ENCODE measurements at regions of chr5 and their contacts with region 1.

Region 1: DNA sequence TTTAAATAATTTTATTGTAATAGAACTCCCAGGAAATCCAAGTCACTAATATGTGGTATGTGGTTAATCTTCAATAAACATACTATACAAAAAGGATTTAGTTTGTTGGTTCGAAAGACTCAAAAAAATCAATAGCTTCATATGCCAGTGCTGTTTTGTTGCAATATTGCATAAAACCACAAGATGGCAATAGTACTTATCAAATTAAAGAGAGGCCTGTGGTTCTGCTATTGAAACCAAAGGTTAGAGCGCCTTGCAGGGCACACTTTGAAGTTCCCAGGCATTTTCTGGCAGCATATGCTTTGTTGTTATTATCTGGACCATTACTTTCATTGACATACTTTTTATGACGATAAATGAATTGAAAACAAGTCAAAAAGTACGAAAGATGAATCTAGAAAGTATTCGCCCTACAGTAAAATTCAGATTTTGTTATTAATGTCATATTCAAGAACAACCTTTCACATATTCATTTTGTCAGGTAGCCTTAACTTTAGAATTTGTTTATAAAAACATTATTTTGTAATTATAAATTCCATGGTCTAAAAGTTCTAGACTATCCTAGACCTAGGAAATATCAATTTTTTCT is 316.3 kb downstream of the MCTP1 start:
- H3K4me3 ChIP-seq: no peak overlapping the region
- H3K27ac ChIP-seq: no peak overlapping the region
- H3K4me1 ChIP-seq: no peaks in the 10 kb centered on the region
- CTCF ChIP-seq: no peak

Region 2: DNA sequence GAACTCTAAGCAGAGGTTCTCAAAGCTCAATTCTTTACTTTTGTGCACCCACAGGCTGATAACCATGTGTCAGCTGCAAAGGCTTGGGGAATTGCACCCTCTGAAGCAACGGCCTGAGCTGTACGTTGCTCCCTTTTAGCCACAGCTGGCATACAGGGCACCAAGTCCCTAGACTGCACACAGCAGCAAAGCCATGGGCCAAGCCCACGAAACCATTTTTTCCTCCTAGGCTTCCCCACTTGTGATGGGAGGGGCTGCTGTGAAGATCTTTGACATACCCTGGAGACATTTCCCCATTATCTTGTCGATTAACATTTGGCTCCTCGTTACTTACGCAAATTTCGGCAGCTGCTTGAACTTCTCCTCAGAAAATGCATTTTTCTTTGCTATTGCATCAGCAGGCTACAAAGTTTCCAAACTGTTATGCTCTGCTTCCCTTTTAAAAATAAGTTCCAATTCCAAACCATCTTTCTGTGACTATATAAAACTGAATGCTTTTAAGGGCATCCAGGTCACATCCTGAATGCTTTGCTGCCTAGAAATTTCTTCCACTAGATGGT is 373.2 kb before region 1 on chr5:
- CTCF ChIA-PET with region 1: no interaction called
- POLR2A ChIA-PET with region 1: no interaction called
- H3K4me3 ChIP-seq: no peak overlapping the region
- H3K27ac ChIP-seq: no peak overlapping the region
- H3K4me1 ChIP-seq: no peaks in the 10 kb centered on the region
- CTCF ChIP-seq: no peak

Region 3: GRCh38 chr5:94928891-94929290 is 39.7 kb before region 1 on chr5:
- CTCF ChIA-PET with region 1: no interaction called
- POLR2A ChIA-PET with region 1: no interaction called
- H3K4me3 ChIP-seq: no peak overlapping the region
- H3K27ac ChIP-seq: no peak overlapping the region
- H3K4me1 ChIP-seq: no peaks in the 10 kb centered on the region
- CTCF ChIP-seq: no peak

Region 4: DNA sequence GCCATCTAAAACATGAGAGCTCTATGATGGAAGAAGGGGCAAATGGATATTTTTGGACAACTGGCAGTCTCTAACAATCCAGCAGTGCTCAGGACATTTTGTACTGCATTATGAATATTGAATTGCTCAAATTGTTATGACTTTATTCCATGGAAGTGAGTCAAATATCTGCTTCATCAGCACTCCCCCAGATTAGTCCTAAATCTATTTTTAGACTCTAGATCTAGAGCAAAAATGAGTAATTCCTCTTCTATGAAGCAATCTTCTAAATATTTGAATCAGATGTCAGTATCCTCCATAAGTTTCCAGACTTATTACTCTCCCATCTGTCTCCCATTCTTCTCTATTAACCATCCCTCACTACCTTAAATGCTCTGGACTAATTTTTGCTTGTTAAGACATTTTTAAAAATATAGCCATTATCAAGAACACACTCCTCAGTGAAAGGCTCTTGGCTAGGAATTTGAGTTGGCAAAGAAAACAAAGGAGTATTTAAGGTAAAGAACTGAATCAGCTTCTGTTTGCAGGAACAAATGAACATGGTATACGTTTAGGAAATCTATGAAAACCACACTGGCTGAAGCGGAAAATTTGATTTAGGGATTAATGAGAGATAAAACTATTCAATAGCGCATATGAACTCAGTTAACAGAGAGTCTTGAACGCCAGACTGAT is 15.4 kb after region 1 on chr5:
- CTCF ChIA-PET with region 1: interaction called, 14 read pairs
- POLR2A ChIA-PET with region 1: no interaction called
- H3K4me3 ChIP-seq: no peak overlapping the region
- H3K27ac ChIP-seq: no peak overlapping the region
- H3K4me1 ChIP-seq: no peaks in the 10 kb centered on the region
- CTCF ChIP-seq: no peak

Measured in HEK293 (cell line).